Activated T-helper 2 cell treated with anti-CD3 and anti-CD28 coated beads, Interferon-gamma antibody, Interleukin-2, Interleukin-4, amounts not matched to agents 10 μg/mL and 5 μg/mL and 100 μg/mL, durations not matched to agents 14 hours and 24 hours and 36 hours (primary cell): ENCODE measurements at regions of chr11 and their contacts with region 1.

Region 1: DNA sequence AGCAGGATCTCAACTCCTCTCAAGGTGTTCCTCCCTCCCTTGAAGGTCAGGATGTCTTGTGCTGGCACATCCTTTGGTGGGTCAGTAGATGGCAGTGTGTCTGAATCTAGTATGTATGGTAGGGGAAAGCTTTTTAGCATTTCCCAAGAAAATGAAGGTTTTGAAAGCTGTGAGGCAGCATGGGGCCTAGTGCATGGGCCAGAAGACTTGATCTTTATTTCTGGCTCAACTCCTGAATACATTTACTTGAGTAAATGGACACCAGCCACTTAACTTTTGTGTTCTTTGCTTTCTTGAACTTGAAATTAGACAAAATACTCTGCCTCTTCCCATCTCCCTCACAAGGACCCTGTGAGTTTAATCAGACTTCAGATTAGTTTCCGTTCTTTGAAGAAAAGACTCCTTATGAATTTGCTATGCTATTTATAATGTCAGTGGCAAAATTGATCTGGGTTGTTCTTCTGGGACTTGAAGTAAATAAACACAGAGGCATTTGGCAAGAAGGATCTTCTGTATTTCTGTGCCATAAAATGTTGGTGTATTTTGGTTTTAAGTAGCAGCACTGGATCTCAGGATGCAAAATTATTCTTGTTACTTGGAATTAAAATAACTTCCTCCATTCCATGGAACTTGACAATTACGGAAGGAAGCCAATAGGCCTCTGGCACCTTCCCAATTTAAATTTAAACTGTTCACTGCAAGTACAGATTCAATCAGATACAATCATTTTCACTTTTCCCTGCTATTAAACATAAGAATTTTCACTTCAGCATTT is 288.8 kb downstream of the CASP12 start:
- DNase-seq: peak; percentile 12
- H3K4me3 Mint-ChIP-seq: no peak overlapping the region
- H3K27ac Mint-ChIP-seq: no peak overlapping the region
- H3K4me1 Mint-ChIP-seq: peaks cover 18% of the 10 kb centered on the region
- H3K27me3 Mint-ChIP-seq: peaks cover 4% of the 10 kb centered on the region

Region 2: DNA sequence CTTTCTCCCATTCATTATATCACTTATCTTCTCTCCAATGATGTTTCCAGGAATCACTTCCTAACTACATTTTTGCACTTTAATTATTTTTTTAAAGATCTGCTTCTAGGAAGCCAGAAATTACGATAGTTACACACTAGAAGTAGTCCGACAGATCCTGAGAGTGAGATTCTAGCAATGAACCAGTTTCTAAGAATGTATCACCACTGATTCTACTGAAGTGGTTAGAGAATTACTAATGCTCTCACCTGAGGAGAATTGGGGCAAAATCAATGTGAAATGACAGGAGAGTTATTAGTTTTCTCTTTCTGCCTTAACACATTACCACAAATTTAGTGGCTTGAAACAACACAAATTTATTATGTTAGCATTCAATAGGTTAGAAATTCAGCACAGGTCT is 47.6 kb after region 1 on chr11:
- intact Hi-C with region 1: loop called (anchors 2 kb)
- DNase-seq: no peak
- H3K4me3 Mint-ChIP-seq: no peak overlapping the region
- H3K27ac Mint-ChIP-seq: no peak overlapping the region
- H3K4me1 Mint-ChIP-seq: peaks cover 42% of the 10 kb centered on the region
- H3K27me3 Mint-ChIP-seq: no peaks in the 10 kb centered on the region

Region 3: GRCh38 chr11:104918113-104918824 is 308.8 kb after region 1 on chr11:
- intact Hi-C with region 1: loop called (anchors 1 kb)
- DNase-seq: no peak
- H3K4me3 Mint-ChIP-seq: peak overlapping the region; percentile 81
- H3K27ac Mint-ChIP-seq: peak overlapping the region; percentile 71
- H3K4me1 Mint-ChIP-seq: peaks cover 37% of the 10 kb centered on the region
- H3K27me3 Mint-ChIP-seq: no peaks in the 10 kb centered on the region

Region 4: GRCh38 chr11:104968355-104968855 is 358.9 kb after region 1 on chr11 and contains the start of gene CASP4:
- intact Hi-C with region 1: loop called (anchors 5 kb)
- DNase-seq: no peak
- H3K4me3 Mint-ChIP-seq: peak within 1 kb of the TSS; percentile 86
- H3K27ac Mint-ChIP-seq: peak within 1 kb of the TSS; percentile 75
- H3K4me1 Mint-ChIP-seq: peaks cover 34% of the 10 kb centered on the region
- H3K27me3 Mint-ChIP-seq: no peaks in the 10 kb centered on the region
- total RNA-seq, gene CASP4: 31.1 and 32.0 TPM in 2 replicates

Region 5: DNA sequence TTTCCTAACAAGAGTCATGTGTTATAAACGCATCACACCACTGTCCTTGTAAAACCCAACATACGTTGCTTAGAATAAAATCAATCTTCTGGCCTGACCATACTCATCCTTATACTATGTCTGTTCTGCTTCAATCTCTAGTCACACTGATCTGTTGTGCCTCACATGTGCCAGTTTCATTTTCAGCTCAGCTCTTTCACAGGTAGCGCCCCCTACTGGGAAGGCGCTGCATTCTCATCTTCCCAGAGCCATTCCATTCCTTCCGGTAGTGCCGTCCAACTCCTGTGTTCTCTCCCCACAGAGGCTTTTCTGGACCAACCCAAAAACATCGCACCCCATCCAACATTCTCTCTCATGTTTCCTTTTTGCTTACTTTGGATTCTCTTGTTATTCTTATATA is 391.3 kb after region 1 on chr11:
- intact Hi-C with region 1: loop called (anchors 1 kb)
- DNase-seq: peak; percentile 31
- H3K4me3 Mint-ChIP-seq: no peak overlapping the region
- H3K27ac Mint-ChIP-seq: no peak overlapping the region
- H3K4me1 Mint-ChIP-seq: peaks cover 5% of the 10 kb centered on the region
- H3K27me3 Mint-ChIP-seq: peaks cover 1% of the 10 kb centered on the region

Region 6: GRCh38 chr11:105109855-105110687 is 500.6 kb after region 1 on chr11:
- intact Hi-C with region 1: loop called (anchors 10 kb)
- DNase-seq: no peak
- H3K4me3 Mint-ChIP-seq: no peak overlapping the region
- H3K27ac Mint-ChIP-seq: no peak overlapping the region
- H3K4me1 Mint-ChIP-seq: peaks cover 12% of the 10 kb centered on the region
- H3K27me3 Mint-ChIP-seq: peaks cover 18% of the 10 kb centered on the region